Mammary epithelial cell (primary cell): ENCODE measurements at regions of chr15 and their contacts with region 1.

Region 1: GRCh38 chr15:35874260-35874905 is 328.4 kb upstream of the DPH6 start:
- DNase-seq: peak; percentile 92
- H3K4me3 ChIP-seq: no peak overlapping the region
- H3K27ac ChIP-seq: peak overlapping the region; percentile 39
- H3K4me1 ChIP-seq: peaks cover 20% of the 10 kb centered on the region
- H3K27me3 ChIP-seq: no peaks in the 10 kb centered on the region
- CTCF ChIP-seq: no peak

Region 2: DNA sequence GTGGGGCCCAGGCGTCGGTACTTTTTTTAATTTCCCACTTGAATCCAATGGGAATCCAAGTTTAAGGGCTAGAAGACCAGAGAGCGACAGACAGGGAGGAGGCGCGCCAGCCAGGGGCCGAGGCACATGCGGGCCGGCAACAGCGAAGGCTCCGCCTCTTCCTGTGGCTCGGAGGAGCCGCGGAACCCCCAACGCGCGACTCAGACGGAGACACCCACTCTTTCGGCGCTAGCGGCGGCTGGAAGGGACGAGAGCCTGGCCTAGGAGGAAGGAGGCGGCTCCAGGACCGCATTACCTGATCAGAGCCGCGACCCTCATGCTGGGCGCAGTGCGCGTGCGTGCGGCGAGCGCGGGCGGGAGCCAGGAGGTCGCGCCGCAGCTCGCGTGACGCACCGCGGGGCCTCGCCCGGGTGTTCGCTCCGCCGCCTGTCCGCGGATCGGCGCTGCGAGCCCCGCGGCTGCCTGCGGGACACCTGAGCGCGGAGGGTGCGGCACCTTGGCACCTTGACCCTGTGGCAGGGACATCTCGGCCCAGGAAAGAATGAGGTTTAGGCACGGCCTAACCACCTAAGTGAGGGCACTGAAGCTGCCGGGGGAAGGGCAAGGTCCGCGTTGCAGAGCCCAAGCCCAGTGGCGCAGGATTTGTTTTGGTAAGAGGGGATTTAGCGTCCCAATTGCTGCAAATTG is 328.4 kb before region 1 on chr15 and contains the start of gene DPH6:
- CTCF ChIA-PET with region 1: no interaction called
- dilution Hi-C with region 1: no loop called
- in situ Hi-C with region 1: loop called in 1 of 2 experiments (anchors 25 kb)
- intact Hi-C with region 1: loop called (anchors 5 kb)
- DNase-seq: peak; percentile 84
- H3K4me3 ChIP-seq: peak within 1 kb of the TSS; percentile 71 to 96 (median 71)
- H3K27ac ChIP-seq: peak within 1 kb of the TSS; percentile 88
- H3K4me1 ChIP-seq: peaks cover 3% of the 10 kb centered on the region
- H3K27me3 ChIP-seq: no peaks in the 10 kb centered on the region
- CTCF ChIP-seq: no peak
- total RNA-seq, gene DPH6: 16.3 to 17.0 TPM